ENCODE measurements at regions of chr3 and their contacts with region 1.

Region 1: GRCh38 chr3:66038726-66039589 is at the start of gene MAGI1:
- DNase-seq: peak; percentile 94
- H3K4me3 ChIP-seq: peak within 1 kb of the TSS; percentile 71 to 90 (median 80)
- H3K27ac ChIP-seq: peak within 1 kb of the TSS; percentile 88 to 96 (median 92)
- H3K4me1 ChIP-seq: peaks cover 6 to 40% (median 35%) of the 10 kb centered on the region in 4 donors
- H3K27me3 ChIP-seq: no peaks in the 10 kb centered on the region
- CTCF ChIP-seq: peak in 1 of 3 experiments; percentile 2
- EP300 ChIP-seq: no peak
- POLR2A ChIP-seq: no peak
- total RNA-seq, gene MAGI1: 17.1 to 35.1 (median 25.2) TPM

Region 2: GRCh38 chr3:65785065-65785645 is 253.8 kb before region 1 on chr3:
- intact Hi-C with region 1: loop called (anchors 10 kb)
- DNase-seq: no peak
- H3K4me3 ChIP-seq: no peak overlapping the region
- H3K27ac ChIP-seq: no peak overlapping the region
- H3K4me1 ChIP-seq: peaks cover 17 to 21% (median 18%) of the 10 kb centered on the region in 4 donors
- H3K27me3 ChIP-seq: no peaks in the 10 kb centered on the region
- CTCF ChIP-seq: peak; percentile 53 to 78 (median 75)
- EP300 ChIP-seq: no peak
- POLR2A ChIP-seq: no peak

Region 3: GRCh38 chr3:65894679-65895453 is 144.1 kb before region 1 on chr3:
- intact Hi-C with region 1: loop called (anchors 5 kb)
- DNase-seq: no peak
- H3K4me3 ChIP-seq: no peak overlapping the region
- H3K27ac ChIP-seq: no peak overlapping the region
- H3K4me1 ChIP-seq: peaks cover 0 to 7% (median under 1%) of the 10 kb centered on the region in 4 donors
- H3K27me3 ChIP-seq: no peaks in the 10 kb centered on the region
- CTCF ChIP-seq: no peak
- EP300 ChIP-seq: no peak
- POLR2A ChIP-seq: no peak

Region 4: GRCh38 chr3:65936908-65937638 is 101.9 kb before region 1 on chr3:
- intact Hi-C with region 1: no loop called
- DNase-seq: no peak
- H3K4me3 ChIP-seq: no peak overlapping the region
- H3K27ac ChIP-seq: peak overlapping the region in 1 of 4 donors; percentile 17
- H3K4me1 ChIP-seq: peaks cover 0 to 33% (median 2%) of the 10 kb centered on the region in 4 donors
- H3K27me3 ChIP-seq: no peaks in the 10 kb centered on the region
- CTCF ChIP-seq: no peak
- EP300 ChIP-seq: no peak
- POLR2A ChIP-seq: no peak

Region 5: DNA sequence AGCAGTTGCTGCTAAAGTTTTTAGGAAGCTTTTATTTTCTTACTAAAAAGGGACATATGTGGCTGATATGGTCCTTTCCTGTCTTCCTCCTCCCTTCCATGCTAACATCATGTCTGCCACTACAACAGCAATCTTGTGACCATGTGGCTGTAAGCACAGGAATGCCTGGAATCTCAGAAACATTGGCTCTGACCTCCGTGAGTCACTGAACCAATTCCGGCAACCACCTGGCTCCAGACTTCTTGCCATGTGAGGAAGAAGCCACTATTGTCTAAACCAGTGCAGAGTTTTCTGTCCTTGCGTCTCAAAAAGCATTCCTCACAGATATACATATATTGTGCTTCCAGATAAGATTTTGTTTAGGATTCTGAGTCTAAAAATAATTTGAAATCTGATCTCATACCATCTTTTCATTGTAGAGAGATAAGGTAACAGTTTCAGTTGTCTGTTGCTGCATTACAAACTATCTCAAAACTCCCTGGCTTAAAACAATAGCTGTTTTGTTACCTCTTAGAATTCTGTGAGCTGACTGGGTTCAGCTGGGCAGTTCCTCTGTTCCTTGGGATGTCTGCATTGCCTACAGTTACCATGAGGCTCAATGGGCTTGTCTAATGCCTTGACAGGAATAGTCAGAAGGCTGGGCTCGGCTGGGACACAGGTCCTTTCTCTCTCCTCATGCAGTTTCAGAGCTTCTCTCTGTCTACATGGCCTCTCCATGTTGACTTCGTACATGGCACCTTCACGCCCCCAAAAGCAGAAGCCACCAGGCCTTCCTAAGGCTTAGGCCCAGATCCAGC is 77.1 kb after region 1 on chr3:
- intact Hi-C with region 1: loop called (anchors 5 kb)
- DNase-seq: no peak
- H3K4me3 ChIP-seq: no peak overlapping the region
- H3K27ac ChIP-seq: peak overlapping the region; percentile 34 to 63 (median 58)
- H3K4me1 ChIP-seq: peaks cover 15 to 18% (median 16%) of the 10 kb centered on the region in 4 donors
- H3K27me3 ChIP-seq: no peaks in the 10 kb centered on the region
- CTCF ChIP-seq: no peak
- EP300 ChIP-seq: no peak
- POLR2A ChIP-seq: no peak

Region 6: GRCh38 chr3:66138336-66139313 is 99.7 kb after region 1 on chr3:
- intact Hi-C with region 1: loop called (anchors 5 kb)
- DNase-seq: no peak
- H3K4me3 ChIP-seq: no peak overlapping the region
- H3K27ac ChIP-seq: no peak overlapping the region
- H3K4me1 ChIP-seq: peaks cover 0 to 9% (median 5%) of the 10 kb centered on the region in 4 donors
- H3K27me3 ChIP-seq: no peaks in the 10 kb centered on the region
- CTCF ChIP-seq: peak; percentile 74 to 84 (median 77)
- EP300 ChIP-seq: no peak
- POLR2A ChIP-seq: no peak

Measured in esophagus muscularis mucosa (tissue), 4 donors.